ENCODE measurements at regions of chr10 and their contacts with region 1.

Region 1: GRCh38 chr10:93482145-93482834 is at the start of gene MYOF:
- DNase-seq: no peak
- ATAC-seq: peak; percentile 91
- H3K4me3 Mint-ChIP-seq: peak within 1 kb of the TSS; percentile 81
- H3K27ac Mint-ChIP-seq: peak within 1 kb of the TSS; percentile 4
- H3K4me1 Mint-ChIP-seq: peaks cover 15% of the 10 kb centered on the region
- H3K27me3 Mint-ChIP-seq: peaks cover 9% of the 10 kb centered on the region
- CTCF ChIP-seq: no peak
- total RNA-seq, gene MYOF: 0.09 and 0.15 TPM in 2 replicates

Region 2: DNA sequence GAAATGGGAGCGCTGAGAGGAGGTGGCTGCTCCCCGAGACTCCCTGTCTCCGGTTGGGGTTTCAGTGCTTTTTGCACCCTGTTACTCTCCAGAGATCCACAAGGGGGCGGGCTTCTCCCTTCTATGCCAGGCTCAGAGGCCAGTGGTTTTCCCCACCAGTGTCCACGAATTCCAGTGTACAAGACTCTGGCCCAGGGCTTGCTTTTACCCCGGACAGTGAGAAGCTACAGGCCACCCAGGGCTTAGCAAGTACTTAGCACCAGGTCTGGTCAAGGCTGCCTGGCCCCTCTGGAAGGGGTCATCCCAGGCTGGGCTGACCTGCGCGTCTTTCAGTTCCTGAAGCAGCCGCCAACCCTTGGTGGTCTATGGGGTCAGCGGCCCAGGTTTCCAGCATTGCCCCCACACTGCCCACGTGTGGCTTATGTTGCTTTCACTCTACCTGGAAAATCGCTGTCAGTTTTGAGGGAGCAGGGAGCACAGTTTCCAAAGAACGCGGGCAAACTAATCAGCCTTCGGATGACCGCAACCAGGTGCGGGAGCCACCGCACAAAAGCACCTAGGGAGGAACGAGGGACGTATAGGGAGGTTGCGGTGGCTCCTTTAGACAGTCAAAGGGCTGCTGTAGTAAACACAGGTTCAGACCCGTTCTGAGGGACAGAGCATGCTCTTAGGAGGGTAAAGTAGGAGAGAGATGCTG is 401.8 kb before region 1 on chr10:
- CTCF ChIA-PET with region 1: no interaction called
- POLR2A ChIA-PET with region 1: no interaction called
- intact Hi-C with region 1: loop called (anchors 5 kb)
- DNase-seq: no peak
- ATAC-seq: peak; percentile 56
- H3K4me3 Mint-ChIP-seq: no peak overlapping the region
- H3K27ac Mint-ChIP-seq: no peak overlapping the region
- H3K4me1 Mint-ChIP-seq: peaks cover 9% of the 10 kb centered on the region
- H3K27me3 Mint-ChIP-seq: peaks cover 51% of the 10 kb centered on the region
- CTCF ChIP-seq: no peak

Region 3: GRCh38 chr10:93309062-93309461 is 173.2 kb before region 1 on chr10:
- CTCF ChIA-PET with region 1: no interaction called
- POLR2A ChIA-PET with region 1: no interaction called
- intact Hi-C with region 1: no loop called
- DNase-seq: no peak
- ATAC-seq: no peak
- H3K4me3 Mint-ChIP-seq: no peak overlapping the region
- H3K27ac Mint-ChIP-seq: no peak overlapping the region
- H3K4me1 Mint-ChIP-seq: no peaks in the 10 kb centered on the region
- H3K27me3 Mint-ChIP-seq: peaks cover 7% of the 10 kb centered on the region
- CTCF ChIP-seq: no peak

Region 4: DNA sequence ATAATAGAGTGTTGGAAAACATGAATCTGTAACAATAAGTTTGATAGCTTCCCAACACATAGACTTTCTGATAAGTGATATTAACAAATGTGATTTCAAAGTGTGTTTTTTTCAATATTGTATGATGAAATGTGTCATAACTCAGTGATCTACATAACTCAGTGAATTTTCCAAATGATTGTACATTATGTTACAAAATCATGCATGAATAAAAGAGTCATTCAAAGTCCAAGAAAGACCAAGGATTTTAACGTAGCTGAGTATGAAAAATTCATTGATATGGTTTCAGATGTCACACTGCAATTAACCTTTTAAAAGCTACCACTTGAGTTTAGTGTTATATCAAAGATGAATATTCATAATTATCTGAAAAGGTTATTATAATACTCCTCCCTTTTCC is 111.3 kb before region 1 on chr10:
- CTCF ChIA-PET with region 1: interaction called, 237 read pairs
- POLR2A ChIA-PET with region 1: interaction called, 6 read pairs
- intact Hi-C with region 1: loop called (anchors 1 kb)
- DNase-seq: no peak
- ATAC-seq: no peak
- H3K4me3 Mint-ChIP-seq: no peak overlapping the region
- H3K27ac Mint-ChIP-seq: no peak overlapping the region
- H3K4me1 Mint-ChIP-seq: no peaks in the 10 kb centered on the region
- H3K27me3 Mint-ChIP-seq: peaks cover 3% of the 10 kb centered on the region
- CTCF ChIP-seq: no peak

Region 5: DNA sequence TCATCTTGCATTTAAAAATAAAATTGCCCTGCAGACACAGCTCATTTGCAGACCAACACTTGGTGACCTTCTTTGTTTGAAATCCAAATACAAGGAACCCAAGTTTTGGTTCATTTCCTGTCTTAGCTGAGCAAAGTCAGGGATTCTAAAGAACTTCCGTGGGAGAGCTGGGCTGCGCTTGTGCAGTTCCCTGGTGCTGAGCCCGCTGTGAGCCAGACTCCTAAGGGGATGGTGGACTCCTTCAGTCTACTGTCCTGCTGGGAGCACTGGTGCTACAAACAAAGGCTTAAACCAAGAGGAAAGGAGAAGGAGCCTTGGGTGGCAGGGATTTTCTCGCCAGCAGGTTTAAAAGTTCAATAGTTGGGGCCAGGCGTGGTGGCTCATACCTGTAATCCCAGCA is 60.1 kb before region 1 on chr10:
- CTCF ChIA-PET with region 1: no interaction called
- POLR2A ChIA-PET with region 1: interaction called, 7 read pairs
- intact Hi-C with region 1: loop called (anchors 1 kb)
- DNase-seq: no peak
- ATAC-seq: no peak
- H3K4me3 Mint-ChIP-seq: no peak overlapping the region
- H3K27ac Mint-ChIP-seq: no peak overlapping the region
- H3K4me1 Mint-ChIP-seq: peaks cover 3% of the 10 kb centered on the region
- H3K27me3 Mint-ChIP-seq: no peaks in the 10 kb centered on the region
- CTCF ChIP-seq: no peak

Region 6: GRCh38 chr10:93515071-93516005 is 33.0 kb after region 1 on chr10:
- CTCF ChIA-PET with region 1: interaction called, 4 read pairs
- POLR2A ChIA-PET with region 1: no interaction called
- intact Hi-C with region 1: loop called (anchors 1 kb)
- DNase-seq: no peak
- ATAC-seq: no peak
- H3K4me3 Mint-ChIP-seq: no peak overlapping the region
- H3K27ac Mint-ChIP-seq: no peak overlapping the region
- H3K4me1 Mint-ChIP-seq: peaks cover 9% of the 10 kb centered on the region
- H3K27me3 Mint-ChIP-seq: no peaks in the 10 kb centered on the region
- CTCF ChIP-seq: no peak

Measured in activated B cell treated with CpG ODN at 0.5 μM for 24 hours (primary cell).